Endothelial cell of umbilical vein (primary cell): ENCODE measurements at regions of chr7 and their contacts with region 1.

Region 1: DNA sequence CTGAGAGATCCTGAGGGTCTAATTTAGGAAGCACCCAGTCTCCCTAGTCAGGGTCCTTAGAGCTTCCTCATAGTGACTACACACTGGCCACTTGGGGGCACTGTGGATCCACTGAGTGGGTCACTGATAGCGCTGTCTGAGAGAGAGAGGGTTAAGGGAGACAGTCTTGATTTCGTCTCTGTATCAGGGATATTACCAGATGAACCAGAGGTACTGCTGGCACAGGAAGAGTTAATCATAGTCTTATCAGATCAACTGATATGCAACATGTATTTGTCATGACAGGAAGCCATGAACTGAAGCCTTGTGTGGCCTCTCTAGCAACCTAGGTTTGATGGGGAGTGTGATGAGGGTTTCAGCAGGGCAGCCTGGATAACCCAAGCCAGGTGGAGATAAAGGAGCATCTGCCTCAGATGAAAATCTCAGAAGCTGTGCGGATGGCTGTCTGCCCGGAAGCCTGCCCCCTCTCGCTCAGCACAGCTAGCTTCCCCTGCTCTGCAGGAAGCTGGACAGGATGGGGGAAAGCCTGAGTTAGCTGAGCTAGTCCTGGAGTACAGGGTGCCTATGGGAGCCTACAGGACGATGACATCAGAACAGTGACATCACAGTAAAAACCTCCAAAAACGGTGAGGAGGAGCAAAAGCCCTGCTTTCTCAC is 214.0 kb upstream of the PRSS1 start:
- DNase-seq: peak; percentile 86
- H3K4me3 ChIP-seq: no peak overlapping the region
- H3K27ac ChIP-seq: peak overlapping the region; percentile 46
- H3K4me1 ChIP-seq: peaks cover 37% of the 10 kb centered on the region
- H3K27me3 ChIP-seq: no peaks in the 10 kb centered on the region
- CTCF ChIP-seq: peak; percentile 87 to 90
- POLR2A ChIP-seq: peak; percentile 45

Region 2: GRCh38 chr7:141975806-141976523 is 559.3 kb before region 1 on chr7:
- CTCF ChIA-PET with region 1: no interaction called
- POLR2A ChIA-PET with region 1: no interaction called
- dilution Hi-C with region 1: no loop called
- intact Hi-C with region 1: no loop called
- DNase-seq: peak; percentile 12
- H3K4me3 ChIP-seq: no peak overlapping the region
- H3K27ac ChIP-seq: no peak overlapping the region
- H3K4me1 ChIP-seq: no peaks in the 10 kb centered on the region
- H3K27me3 ChIP-seq: no peaks in the 10 kb centered on the region
- CTCF ChIP-seq: peak; percentile 63 to 73
- POLR2A ChIP-seq: no peak

Region 3: DNA sequence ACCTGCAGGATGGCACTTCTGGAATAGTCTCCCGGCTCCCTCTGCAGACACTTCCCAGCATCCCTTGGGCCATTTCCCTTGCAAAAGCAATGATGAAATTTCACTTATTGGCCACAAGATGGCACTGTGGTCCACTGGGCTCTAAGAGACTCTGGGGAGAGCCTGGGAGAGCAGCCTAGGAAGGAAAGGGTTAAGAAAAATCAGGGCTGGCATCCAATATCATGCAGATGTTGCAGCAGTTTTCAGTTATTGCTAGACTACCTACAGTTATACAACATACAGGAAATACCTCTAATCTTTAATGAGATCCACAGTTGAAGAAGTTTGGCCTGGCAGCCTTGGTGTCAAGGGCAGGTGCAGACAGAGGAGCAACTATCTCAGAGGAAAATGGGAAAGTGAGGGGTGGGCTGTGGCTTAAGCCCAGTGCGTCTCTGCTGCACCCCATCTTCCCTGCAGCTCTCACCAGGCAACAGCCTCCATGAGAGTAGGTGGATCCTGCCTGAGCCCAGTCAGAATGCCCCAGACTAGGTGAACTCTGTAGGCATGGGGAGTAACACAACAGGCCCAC is 177.2 kb before region 1 on chr7:
- CTCF ChIA-PET with region 1: no interaction called
- POLR2A ChIA-PET with region 1: no interaction called
- dilution Hi-C with region 1: no loop called
- intact Hi-C with region 1: no loop called
- DNase-seq: peak; percentile 62
- H3K4me3 ChIP-seq: no peak overlapping the region
- H3K27ac ChIP-seq: no peak overlapping the region
- H3K4me1 ChIP-seq: no peaks in the 10 kb centered on the region
- H3K27me3 ChIP-seq: no peaks in the 10 kb centered on the region
- CTCF ChIP-seq: peak; percentile 73 to 86
- POLR2A ChIP-seq: no peak

Region 4: DNA sequence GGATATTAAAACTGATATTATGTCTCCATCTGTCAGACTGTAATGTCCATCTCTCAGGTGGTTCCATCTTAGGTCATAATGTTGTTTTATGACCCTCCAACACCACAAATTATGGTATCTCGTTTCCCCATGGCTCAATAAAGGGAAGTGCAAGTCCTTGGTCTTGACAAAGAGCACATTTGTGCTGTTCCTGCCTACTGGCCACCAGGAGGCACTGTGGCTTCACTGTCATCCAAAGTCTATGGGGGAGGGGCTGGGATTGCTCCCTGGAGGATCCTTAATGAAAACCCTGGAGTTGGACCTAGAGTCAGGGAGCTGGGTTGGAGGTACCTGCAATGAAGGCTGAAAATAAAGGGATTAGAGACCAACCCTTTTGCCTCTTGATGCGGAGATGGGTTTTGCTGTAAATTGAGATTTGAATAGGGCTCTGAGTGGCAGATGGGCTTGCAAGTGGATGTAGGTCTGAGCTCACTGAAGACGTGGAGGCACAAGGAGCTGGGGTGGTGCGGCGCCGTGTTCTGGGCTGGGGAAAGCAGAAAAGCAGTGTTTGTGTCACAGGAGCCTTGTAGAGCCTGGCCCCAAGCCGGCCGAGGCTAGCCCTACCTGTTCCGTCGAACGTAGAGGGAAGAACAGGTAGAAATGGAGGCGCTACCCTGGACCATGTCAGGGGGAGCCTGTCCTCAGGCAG is 96.9 kb before region 1 on chr7:
- CTCF ChIA-PET with region 1: interaction called, 6 read pairs
- POLR2A ChIA-PET with region 1: no interaction called
- dilution Hi-C with region 1: no loop called
- intact Hi-C with region 1: loop called (anchors 1 kb)
- DNase-seq: peak; percentile 38
- H3K4me3 ChIP-seq: no peak overlapping the region
- H3K27ac ChIP-seq: no peak overlapping the region
- H3K4me1 ChIP-seq: peaks cover 27% of the 10 kb centered on the region
- H3K27me3 ChIP-seq: no peaks in the 10 kb centered on the region
- CTCF ChIP-seq: peak; percentile 81 to 98
- POLR2A ChIP-seq: no peak

Region 5: GRCh38 chr7:142557971-142558582 is 22.8 kb after region 1 on chr7:
- CTCF ChIA-PET with region 1: interaction called, 63 read pairs
- POLR2A ChIA-PET with region 1: no interaction called
- dilution Hi-C with region 1: no loop called
- intact Hi-C with region 1: loop called (anchors 1 kb)
- DNase-seq: peak; percentile 48
- H3K4me3 ChIP-seq: no peak overlapping the region
- H3K27ac ChIP-seq: peak overlapping the region; percentile 70
- H3K4me1 ChIP-seq: peaks cover 40% of the 10 kb centered on the region
- H3K27me3 ChIP-seq: no peaks in the 10 kb centered on the region
- CTCF ChIP-seq: peak; percentile 62 to 89
- POLR2A ChIP-seq: no peak

Region 6: GRCh38 chr7:142598297-142598696 is 63.0 kb after region 1 on chr7:
- CTCF ChIA-PET with region 1: interaction called, 86 read pairs
- POLR2A ChIA-PET with region 1: no interaction called
- dilution Hi-C with region 1: no loop called
- intact Hi-C with region 1: no loop called
- DNase-seq: no peak
- H3K4me3 ChIP-seq: no peak overlapping the region
- H3K27ac ChIP-seq: no peak overlapping the region
- H3K4me1 ChIP-seq: no peaks in the 10 kb centered on the region
- H3K27me3 ChIP-seq: no peaks in the 10 kb centered on the region
- CTCF ChIP-seq: no peak
- POLR2A ChIP-seq: no peak

Region 7: GRCh38 chr7:142669074-142669654 is 133.9 kb after region 1 on chr7:
- CTCF ChIA-PET with region 1: interaction called, 6 read pairs
- POLR2A ChIA-PET with region 1: no interaction called
- dilution Hi-C with region 1: no loop called
- intact Hi-C with region 1: loop called (anchors 1 kb)
- DNase-seq: peak; percentile 53
- H3K4me3 ChIP-seq: no peak overlapping the region
- H3K27ac ChIP-seq: no peak overlapping the region
- H3K4me1 ChIP-seq: no peaks in the 10 kb centered on the region
- H3K27me3 ChIP-seq: peaks cover 2 to 4% of the 10 kb centered on the region in 2 experiments
- CTCF ChIP-seq: peak; percentile 8 to 27
- POLR2A ChIP-seq: no peak

Region 8: DNA sequence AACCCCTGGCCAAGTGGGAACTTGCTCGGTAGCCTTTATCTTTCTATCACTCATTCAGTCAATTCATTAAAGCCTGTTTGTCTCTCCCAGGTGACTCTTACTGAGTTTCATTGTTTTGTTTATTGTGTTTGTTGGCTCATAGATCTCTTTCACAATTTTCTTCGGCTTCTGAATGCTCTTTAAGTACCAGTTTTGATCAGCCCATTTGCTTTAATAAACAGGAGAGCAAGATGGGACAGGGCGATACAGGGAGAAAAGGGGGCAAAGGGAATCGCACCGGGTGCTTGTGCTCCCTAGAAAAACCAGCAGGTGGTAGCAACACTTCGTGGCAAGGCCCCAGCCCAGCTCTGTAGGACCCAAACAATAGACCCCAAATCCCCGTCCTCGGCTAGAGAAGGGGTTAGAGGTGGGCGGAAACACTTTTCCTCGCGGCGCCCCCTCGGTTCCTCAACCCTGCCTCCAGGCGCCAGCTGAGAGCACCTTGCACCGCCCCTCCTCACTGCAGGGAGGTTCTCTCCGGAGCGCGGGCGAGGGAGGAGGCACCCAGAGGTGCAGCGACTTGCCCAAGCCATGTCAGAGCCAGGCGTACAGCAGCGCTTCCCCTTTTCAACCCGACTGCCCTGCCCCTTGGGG is 318.6 kb after region 1 on chr7:
- CTCF ChIA-PET with region 1: interaction called, 3 read pairs
- POLR2A ChIA-PET with region 1: no interaction called
- dilution Hi-C with region 1: no loop called
- intact Hi-C with region 1: loop called (anchors 5 kb)
- DNase-seq: peak; percentile 77
- H3K4me3 ChIP-seq: peak overlapping the region; percentile 48 to 73 (median 65)
- H3K27ac ChIP-seq: no peak overlapping the region
- H3K4me1 ChIP-seq: peaks cover 3% of the 10 kb centered on the region
- H3K27me3 ChIP-seq: peaks cover 7 to 10% of the 10 kb centered on the region in 2 experiments
- CTCF ChIP-seq: peak; percentile 67 to 87
- POLR2A ChIP-seq: no peak